MCF 10A (cell line): ENCODE measurements at regions of chr20 and their contacts with region 1.

Region 1: DNA sequence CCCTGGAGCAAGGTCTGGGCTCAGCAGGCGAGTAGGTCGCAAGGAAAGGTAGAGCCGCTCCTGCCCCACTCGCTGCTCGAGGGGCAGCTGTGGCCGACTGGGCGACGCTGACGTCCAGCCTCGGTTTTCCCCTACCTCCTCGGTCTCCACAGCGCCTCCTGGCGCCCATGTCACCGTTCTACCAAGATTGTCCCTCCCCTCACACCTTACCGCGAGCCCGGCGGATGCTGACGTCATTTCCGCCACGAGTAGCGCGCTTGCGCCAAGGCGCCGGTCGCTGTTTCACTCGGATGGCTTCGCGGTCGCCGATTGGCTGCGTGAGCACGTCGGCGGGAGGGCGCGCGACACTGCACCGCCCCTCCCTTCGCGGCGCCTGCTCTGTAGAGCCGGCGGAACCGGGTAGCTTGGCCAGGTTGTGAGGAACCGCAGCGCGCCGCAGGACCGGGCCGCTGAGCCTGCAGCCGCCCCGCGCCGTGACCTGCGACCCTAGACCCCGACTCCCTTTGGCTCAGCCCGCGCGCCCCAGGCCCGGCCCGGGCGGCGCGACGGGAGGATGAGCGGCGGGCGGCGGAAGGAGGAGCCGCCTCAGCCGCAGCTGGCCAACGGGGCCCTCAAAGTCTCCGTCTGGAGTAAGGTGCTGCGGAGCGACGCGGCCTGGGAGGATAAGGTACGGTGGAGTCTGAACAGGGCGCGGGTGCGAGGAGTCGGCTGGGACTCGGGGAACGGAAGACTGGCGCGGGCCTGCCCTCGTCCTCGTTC is at the start of gene RAB5IF:
- DNase-seq: peak; percentile 98
- H3K4me3 Mint-ChIP-seq: peak within 1 kb of the TSS; percentile 99
- H3K27ac Mint-ChIP-seq: peak within 1 kb of the TSS; percentile 98
- H3K4me1 Mint-ChIP-seq: peaks cover 4% of the 10 kb centered on the region
- H3K27me3 Mint-ChIP-seq: no peaks in the 10 kb centered on the region
- CTCF ChIP-seq: peak; percentile 90
- total RNA-seq, gene RAB5IF: 112 and 125 TPM in 2 replicates

Region 2: GRCh38 chr20:36355469-36356171 is 250.0 kb before region 1 on chr20:
- CTCF ChIA-PET with region 1: no interaction called
- POLR2A ChIA-PET with region 1: no interaction called
- intact Hi-C with region 1: no loop called
- DNase-seq: peak; percentile 2
- H3K4me3 Mint-ChIP-seq: no peak overlapping the region
- H3K27ac Mint-ChIP-seq: no peak overlapping the region
- H3K4me1 Mint-ChIP-seq: no peaks in the 10 kb centered on the region
- H3K27me3 Mint-ChIP-seq: peaks cover 66% of the 10 kb centered on the region
- CTCF ChIP-seq: no peak

Region 3: DNA sequence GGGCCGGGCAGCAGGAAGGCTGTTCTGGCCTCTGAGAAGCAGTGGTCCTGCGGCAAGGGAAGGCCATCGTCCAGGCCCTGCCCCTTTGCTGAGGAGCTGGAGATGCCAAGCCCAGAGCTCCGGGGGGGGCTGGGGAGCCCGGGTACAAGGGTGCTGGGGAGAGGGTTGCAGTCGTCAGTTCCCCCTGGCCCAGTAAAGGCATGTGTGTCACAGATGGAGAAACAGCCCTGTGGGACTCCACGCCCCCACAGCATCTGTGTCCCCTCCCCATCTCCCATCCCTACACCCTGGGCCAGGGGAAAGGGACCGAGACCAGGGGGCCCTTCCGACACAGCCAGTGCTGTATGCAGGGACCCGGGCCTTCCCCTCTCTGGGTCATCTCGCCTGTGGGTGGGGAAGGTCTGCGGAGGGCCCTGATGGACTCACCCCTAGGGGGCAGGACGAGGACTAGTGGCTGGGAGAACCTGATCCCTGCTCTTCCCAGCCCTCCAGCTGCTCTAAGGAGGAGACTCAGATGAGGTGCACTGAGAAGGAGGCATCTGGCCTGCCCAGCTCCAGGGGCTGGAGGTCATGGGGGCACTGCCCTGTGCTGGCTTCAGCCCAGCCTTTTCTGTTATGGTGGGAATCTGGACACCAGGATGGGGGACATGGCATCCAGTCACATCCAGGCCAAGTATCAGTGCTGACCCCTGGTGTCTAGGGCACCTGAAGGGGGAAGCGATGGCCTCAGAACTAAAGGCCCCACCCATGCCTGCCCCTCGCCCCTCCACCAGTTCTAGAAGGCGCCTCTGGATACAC is 63.6 kb before region 1 on chr20:
- CTCF ChIA-PET with region 1: interaction called, 12 read pairs
- POLR2A ChIA-PET with region 1: interaction called, 7 read pairs
- intact Hi-C with region 1: no loop called
- DNase-seq: peak; percentile 17
- H3K4me3 Mint-ChIP-seq: no peak overlapping the region
- H3K27ac Mint-ChIP-seq: peak overlapping the region; percentile 61
- H3K4me1 Mint-ChIP-seq: peaks cover 8% of the 10 kb centered on the region
- H3K27me3 Mint-ChIP-seq: no peaks in the 10 kb centered on the region
- CTCF ChIP-seq: no peak

Region 4: GRCh38 chr20:36562724-36563123 is 42.9 kb before region 1 on chr20:
- CTCF ChIA-PET with region 1: interaction called, 29 read pairs
- POLR2A ChIA-PET with region 1: interaction called, 11 read pairs
- intact Hi-C with region 1: no loop called
- DNase-seq: no peak
- H3K4me3 Mint-ChIP-seq: no peak overlapping the region
- H3K27ac Mint-ChIP-seq: no peak overlapping the region
- H3K4me1 Mint-ChIP-seq: no peaks in the 10 kb centered on the region
- H3K27me3 Mint-ChIP-seq: no peaks in the 10 kb centered on the region
- CTCF ChIP-seq: no peak

Region 5: DNA sequence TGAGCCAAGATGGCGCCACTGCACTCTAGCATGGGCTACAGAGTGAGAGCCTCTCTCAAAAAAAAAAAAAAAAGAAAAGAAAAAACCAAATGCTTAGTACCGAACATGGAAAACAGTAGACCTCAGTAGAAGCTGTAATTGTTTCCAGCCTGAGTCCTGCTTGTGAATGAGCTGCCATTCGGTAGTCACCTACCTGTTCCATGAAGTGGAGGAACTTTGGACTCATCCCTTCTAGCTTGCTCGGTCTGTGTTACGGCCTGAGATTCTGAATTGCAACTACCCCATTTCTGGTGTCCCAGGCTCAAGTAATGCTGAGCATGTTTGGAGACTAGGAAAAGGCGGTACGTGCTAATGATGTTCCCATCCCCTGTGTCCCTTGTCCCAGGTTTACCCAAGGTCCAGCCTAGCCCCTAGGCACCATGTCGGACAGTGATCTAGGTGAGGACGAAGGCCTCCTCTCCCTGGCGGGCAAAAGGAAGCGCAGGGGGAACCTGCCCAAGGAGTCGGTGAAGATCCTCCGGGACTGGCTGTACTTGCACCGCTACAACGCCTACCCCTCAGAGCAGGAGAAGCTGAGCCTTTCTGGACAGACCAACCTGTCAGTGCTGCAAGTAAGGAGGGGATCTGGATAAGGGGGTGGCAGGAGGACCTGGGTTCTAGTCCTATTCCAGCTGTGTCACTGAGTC is 27.1 kb before region 1 on chr20:
- CTCF ChIA-PET with region 1: interaction called, 27 read pairs
- POLR2A ChIA-PET with region 1: interaction called, 60 read pairs
- intact Hi-C with region 1: no loop called
- DNase-seq: no peak
- H3K4me3 Mint-ChIP-seq: no peak overlapping the region
- H3K27ac Mint-ChIP-seq: no peak overlapping the region
- H3K4me1 Mint-ChIP-seq: peaks cover 19% of the 10 kb centered on the region
- H3K27me3 Mint-ChIP-seq: no peaks in the 10 kb centered on the region
- CTCF ChIP-seq: no peak

Region 6: DNA sequence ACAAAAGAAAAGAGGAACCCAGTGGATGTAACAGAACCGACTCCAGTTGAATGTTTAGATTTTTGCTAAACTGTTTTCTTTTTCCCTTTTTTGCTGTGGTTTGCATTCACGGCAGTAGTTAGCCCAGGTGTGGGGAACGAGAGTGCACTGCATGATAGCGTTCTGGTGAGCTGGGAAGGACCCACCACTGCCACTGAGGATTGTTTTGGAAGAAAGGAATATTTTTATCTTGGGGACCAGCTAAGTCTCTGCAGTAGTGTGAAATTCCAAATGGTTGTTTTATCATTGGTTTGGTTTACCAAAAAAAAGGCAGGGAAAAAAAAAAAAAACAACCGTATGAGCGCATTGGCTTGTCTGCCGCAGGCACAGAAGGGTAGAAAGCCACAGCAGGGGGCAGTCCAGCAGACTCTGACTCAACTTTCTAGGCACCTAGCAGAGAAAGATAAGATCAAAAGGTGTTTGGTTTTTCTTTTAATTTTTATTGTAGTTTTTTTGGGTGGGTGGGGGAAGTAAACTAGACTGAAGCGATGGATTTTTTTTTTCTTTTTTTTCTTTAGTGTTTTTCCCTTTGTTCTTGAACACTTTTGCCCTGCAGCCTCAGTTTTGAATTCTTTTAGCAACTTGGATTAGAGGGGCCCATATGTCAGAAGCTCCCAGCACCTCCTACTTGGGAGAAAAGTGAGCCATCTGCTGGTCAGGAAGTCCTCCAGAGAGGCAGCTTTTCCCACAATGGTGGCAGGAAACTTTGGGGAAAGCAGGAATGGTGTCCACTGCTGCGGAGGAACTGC is 13.5 kb before region 1 on chr20:
- CTCF ChIA-PET with region 1: interaction called, 58 read pairs
- POLR2A ChIA-PET with region 1: interaction called, 67 read pairs
- intact Hi-C with region 1: no loop called
- DNase-seq: peak; percentile 47
- H3K4me3 Mint-ChIP-seq: no peak overlapping the region
- H3K27ac Mint-ChIP-seq: no peak overlapping the region
- H3K4me1 Mint-ChIP-seq: no peaks in the 10 kb centered on the region
- H3K27me3 Mint-ChIP-seq: no peaks in the 10 kb centered on the region
- CTCF ChIP-seq: peak; percentile 15

Region 7: DNA sequence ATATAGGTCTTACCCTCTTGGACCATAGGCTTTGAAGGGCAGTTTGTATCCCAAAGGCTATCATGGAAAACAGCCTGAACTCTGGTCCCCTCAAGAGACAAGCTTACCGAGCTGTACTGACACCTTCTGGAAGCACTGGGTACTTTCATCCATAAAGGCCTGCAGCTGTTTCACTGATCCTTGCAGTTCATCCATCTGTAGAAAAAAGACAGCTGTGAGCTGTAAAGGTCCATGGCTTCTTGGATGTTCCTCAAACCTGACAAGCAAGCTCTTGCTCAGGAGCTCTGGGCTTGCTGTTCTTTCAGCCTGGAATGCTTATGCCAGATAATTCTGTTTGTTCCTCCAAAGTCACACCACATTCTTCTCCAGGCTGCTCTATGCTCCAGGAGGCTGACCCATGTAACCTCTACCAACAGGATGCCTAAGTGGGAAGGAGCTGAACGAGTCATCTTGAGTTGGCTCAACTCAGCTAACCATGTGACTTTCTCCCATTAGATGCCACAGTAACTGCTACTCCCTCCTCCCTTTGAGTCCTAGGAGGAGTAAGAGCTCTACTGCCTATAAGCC is 149.2 kb after region 1 on chr20:
- CTCF ChIA-PET with region 1: interaction called, 32 read pairs
- POLR2A ChIA-PET with region 1: interaction called, 4 read pairs
- intact Hi-C with region 1: no loop called
- DNase-seq: peak; percentile 65
- H3K4me3 Mint-ChIP-seq: no peak overlapping the region
- H3K27ac Mint-ChIP-seq: no peak overlapping the region
- H3K4me1 Mint-ChIP-seq: no peaks in the 10 kb centered on the region
- H3K27me3 Mint-ChIP-seq: no peaks in the 10 kb centered on the region
- CTCF ChIP-seq: peak; percentile 66

Region 8: GRCh38 chr20:36835453-36836198 is 230.0 kb after region 1 on chr20:
- CTCF ChIA-PET with region 1: interaction called, 6 read pairs
- POLR2A ChIA-PET with region 1: interaction called, 15 read pairs
- intact Hi-C with region 1: no loop called
- DNase-seq: peak; percentile 94
- H3K4me3 Mint-ChIP-seq: peak overlapping the region; percentile 65
- H3K27ac Mint-ChIP-seq: peak overlapping the region; percentile 81
- H3K4me1 Mint-ChIP-seq: no peaks in the 10 kb centered on the region
- H3K27me3 Mint-ChIP-seq: no peaks in the 10 kb centered on the region
- CTCF ChIP-seq: no peak